Activated naive CD4-positive, alpha-beta T cell treated with anti-CD3 and anti-CD28 coated beads for 36 hours (primary cell): ENCODE measurements at regions of chr5 and their contacts with region 1.

Region 1: GRCh38 chr5:53041071-53041692 is 52.0 kb downstream of the ITGA2 start:
- DNase-seq: peak; percentile 22
- H3K4me3 Mint-ChIP-seq: no peak overlapping the region
- H3K27ac Mint-ChIP-seq: no peak overlapping the region
- H3K4me1 Mint-ChIP-seq: peaks cover 35% of the 10 kb centered on the region
- H3K27me3 Mint-ChIP-seq: peaks cover 6% of the 10 kb centered on the region

Region 2: DNA sequence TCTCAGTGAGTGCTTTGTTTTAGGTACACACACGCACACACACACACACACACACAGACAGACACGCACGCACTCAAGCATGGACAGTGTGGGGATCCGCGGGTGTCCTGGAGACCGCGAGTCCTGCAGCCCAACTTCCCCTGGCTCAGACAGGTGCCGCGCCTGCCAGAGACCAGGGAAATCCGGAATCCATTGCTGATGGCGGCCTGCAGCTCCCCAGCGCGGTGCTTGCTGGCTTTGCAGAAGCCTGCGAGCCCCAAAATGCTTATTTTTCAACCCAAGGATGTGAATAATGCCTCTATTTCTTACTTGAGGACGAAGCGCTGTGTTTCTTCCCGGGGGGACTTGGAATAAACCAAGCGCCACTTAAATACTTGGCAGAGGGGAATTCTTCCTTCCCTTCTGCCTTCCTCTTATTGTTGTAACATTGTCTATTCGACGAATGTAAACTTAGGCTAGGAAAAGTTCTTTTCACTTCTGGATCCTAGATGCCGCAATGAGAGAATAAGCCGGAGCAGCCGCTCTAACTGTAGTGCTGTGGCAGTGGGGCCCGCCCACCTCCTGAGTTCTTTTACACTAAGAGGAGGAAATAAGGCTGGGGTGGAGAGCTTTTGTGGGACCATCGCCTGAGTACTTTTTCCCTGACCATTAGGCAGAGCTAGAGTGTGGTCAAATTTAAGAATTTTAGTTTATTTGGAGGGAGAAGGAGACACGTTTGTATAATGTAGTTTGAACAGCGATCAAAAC is 51.2 kb before region 1 on chr5:
- CTCF ChIA-PET with region 1: interaction called, 4 read pairs
- intact Hi-C with region 1: loop called (anchors 2 kb)
- DNase-seq: peak; percentile 73
- H3K4me3 Mint-ChIP-seq: peak overlapping the region; percentile 79
- H3K27ac Mint-ChIP-seq: peak overlapping the region; percentile 50
- H3K4me1 Mint-ChIP-seq: peaks cover 21% of the 10 kb centered on the region
- H3K27me3 Mint-ChIP-seq: peaks cover 4% of the 10 kb centered on the region

Region 3: DNA sequence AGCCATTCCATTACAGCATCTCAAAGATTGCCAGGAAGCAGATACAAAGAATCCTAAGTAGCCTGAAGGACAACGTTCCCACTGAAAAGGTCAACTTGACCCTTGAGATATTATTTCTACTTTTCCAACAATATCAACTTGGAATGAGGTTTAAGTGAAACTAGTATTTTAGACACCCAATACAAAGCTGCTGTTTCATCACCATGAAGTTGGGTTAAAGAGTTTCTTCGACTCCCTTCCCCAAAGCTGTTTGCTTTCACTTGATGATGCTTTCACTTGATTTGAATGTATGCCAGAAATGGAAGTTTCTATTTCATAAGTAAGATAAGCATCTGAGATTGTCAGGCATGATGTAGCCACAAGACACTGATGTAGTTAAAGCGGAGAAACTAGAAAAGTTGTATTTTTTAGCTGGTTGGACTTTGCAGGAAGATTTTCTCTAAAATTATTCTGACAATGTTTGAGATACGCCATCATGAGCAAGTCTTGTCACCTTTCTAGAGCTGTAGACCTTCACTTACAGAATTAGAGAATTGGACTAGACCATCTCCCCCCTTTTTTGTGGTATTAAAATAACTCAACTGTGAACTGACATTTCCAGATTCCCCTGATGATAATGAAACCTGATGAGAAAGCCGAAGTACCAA is 48.3 kb after region 1 on chr5:
- CTCF ChIA-PET with region 1: interaction called, 11 read pairs
- intact Hi-C with region 1: loop called (anchors 1 kb)
- DNase-seq: no peak
- H3K4me3 Mint-ChIP-seq: peak overlapping the region; percentile 45
- H3K27ac Mint-ChIP-seq: peak overlapping the region; percentile 61
- H3K4me1 Mint-ChIP-seq: peaks cover 32% of the 10 kb centered on the region
- H3K27me3 Mint-ChIP-seq: no peaks in the 10 kb centered on the region

Region 4: DNA sequence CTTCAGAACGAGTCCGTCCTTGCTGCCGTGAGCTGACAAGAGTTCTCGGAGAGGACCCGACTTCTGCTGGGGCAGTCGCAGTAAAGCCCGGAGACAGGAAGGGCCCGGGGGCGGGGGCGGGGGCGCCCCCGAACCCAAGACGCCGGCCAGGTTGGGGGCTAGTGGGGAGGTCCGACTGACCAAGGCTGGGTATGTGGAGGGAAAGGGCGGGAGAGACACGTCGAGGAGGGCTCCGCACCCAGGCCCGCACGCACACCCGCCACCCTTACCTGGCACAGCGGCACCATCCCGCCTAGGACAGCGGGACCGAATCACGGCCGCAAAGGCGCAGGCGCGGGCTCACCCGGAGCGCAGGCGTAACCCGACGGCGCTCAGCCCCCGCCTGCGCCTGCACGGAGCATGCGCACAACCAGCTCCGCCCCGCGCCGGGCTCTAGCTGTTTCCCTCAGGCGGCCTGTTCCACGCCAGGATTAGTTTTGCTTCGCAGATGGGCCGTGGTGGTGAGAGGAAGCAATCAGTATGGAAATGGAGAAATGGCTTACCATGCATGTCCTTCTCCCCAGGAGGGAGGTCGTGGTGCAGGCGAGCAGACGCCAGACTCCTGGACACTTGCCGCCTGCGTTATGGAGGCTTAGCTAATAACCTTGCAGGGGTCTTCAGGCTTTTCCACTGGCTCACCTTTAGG is 68.4 kb after region 1 on chr5 and contains the start of gene MOCS2:
- CTCF ChIA-PET with region 1: no interaction called
- intact Hi-C with region 1: loop called (anchors 1 kb)
- DNase-seq: peak; percentile 91
- H3K4me3 Mint-ChIP-seq: peak within 1 kb of the TSS; percentile 92
- H3K27ac Mint-ChIP-seq: peak within 1 kb of the TSS; percentile 86
- H3K4me1 Mint-ChIP-seq: peaks cover 37% of the 10 kb centered on the region
- H3K27me3 Mint-ChIP-seq: no peaks in the 10 kb centered on the region
- total RNA-seq, gene MOCS2: 29.4 to 30.9 TPM